Naive thymus-derived CD4-positive, alpha-beta T cell (primary cell): ENCODE measurements at regions of chr14 and their contacts with region 1.

Region 1: DNA sequence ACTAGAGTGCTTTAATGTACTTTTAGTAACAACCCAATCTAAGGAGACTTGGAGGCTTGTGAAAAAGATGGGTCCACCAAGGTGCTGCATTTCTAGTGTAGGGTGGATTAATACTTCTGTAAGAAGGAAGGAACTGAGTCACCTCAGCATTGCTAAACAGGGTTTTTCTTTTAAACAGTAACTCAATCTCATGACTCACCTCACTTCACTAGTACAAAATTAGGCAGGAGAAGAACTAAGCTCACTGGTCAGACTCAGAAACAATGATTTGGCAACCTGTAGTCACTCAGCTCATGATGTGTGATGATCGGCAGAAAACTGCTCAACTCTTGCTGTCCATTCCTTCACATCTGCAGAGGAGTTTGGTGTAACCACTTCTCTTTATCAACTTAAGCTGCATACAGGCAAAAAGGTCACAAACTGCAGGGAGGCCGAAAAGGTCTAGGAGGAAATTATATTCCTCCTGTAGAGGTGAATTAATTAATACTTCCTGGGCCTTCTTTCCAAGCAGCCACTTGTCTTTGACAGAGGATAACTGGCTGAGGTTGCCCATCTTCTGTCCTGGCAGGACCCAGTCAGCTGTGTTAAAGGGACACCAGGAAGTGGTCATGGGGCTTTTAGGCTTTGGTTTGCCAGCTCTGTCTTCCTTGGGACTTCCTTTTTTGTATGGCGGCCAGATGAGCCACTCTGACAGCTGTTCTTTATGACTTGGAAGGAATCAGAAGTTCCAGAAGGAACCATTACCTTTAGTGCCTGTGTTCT is 466.9 kb downstream of the FUT8 start:
- DNase-seq: no peak
- ATAC-seq: peak; percentile 26
- H3K4me3 ChIP-seq: no peak overlapping the region
- H3K4me3 Mint-ChIP-seq: peak overlapping the region in 1 of 10 donors; percentile 52
- H3K27ac ChIP-seq: no peak overlapping the region
- H3K27ac Mint-ChIP-seq: peak overlapping the region in 7 of 9 donors; percentile 17 to 89 (median 37)
- H3K4me1 ChIP-seq: peaks cover 0 to 27% of the 10 kb centered on the region in 2 donors
- H3K4me1 Mint-ChIP-seq: peaks cover 5 to 35% (median 26%) of the 10 kb centered on the region in 7 donors
- H3K27me3 ChIP-seq: no peaks in the 10 kb centered on the region
- H3K27me3 Mint-ChIP-seq: peaks cover 0 to 4% (median 0%) of the 10 kb centered on the region in 5 donors

Region 2: GRCh38 chr14:65824285-65824977 is 55.0 kb before region 1 on chr14:
- CTCF ChIA-PET with region 1: interaction called, 10 read pairs
- POLR2A ChIA-PET with region 1: no interaction called
- intact Hi-C with region 1: no loop called
- DNase-seq: peak in 8 of 9 donors; percentile 38 to 71 (median 60)
- ATAC-seq: peak; percentile 93
- H3K4me3 ChIP-seq: no peak overlapping the region
- H3K4me3 Mint-ChIP-seq: peak overlapping the region in 1 of 10 donors; percentile 39
- H3K27ac ChIP-seq: no peak overlapping the region
- H3K27ac Mint-ChIP-seq: peak overlapping the region in 3 of 9 donors; percentile 0 to 66 (median 66)
- H3K4me1 ChIP-seq: peaks cover 6 to 8% of the 10 kb centered on the region in 2 donors
- H3K4me1 Mint-ChIP-seq: peaks cover 3 to 33% (median 14%) of the 10 kb centered on the region in 7 donors
- H3K27me3 ChIP-seq: no peaks in the 10 kb centered on the region
- H3K27me3 Mint-ChIP-seq: peaks cover 0 to 7% (median 0%) of the 10 kb centered on the region in 5 donors

Region 3: DNA sequence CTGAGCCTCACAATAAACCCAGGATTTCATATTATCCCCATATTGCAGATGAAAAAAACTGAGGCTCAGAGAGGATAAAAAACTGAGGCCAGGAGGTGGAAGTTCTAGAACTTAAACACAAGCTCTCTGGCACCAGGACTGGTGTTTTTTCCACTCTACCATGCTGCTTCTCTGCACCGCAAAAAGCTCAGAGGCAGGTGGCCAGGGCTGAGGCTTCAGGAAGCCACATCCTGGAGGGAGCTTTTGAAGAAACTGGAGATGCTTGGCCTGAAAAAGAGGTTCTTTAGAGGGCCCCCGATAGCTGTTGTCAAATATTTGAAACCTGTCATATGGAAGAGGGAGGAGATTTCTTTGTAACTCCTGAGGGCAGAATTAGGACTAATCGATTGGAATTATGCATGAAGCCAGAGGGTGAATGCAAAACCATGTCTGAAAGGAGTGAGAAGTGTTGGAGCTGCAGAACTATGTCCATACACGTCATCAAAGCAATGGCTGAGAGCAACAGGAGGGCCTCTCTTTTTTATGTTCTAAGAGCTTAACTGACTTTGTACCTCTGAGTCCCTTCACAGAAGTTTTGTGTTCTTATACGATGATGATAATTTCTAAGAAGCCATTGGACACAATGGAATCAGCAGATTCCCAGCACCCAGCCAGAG is 18.3 kb before region 1 on chr14:
- CTCF ChIA-PET with region 1: interaction called, 7 read pairs
- POLR2A ChIA-PET with region 1: interaction called, 10 read pairs
- intact Hi-C with region 1: loop called in 1 of 2 experiments (anchors 2 kb)
- DNase-seq: peak in 7 of 9 donors; percentile 22 to 64 (median 49)
- ATAC-seq: peak; percentile 62
- H3K4me3 ChIP-seq: no peak overlapping the region
- H3K4me3 Mint-ChIP-seq: peak overlapping the region; percentile 12 to 78 (median 61)
- H3K27ac ChIP-seq: no peak overlapping the region
- H3K27ac Mint-ChIP-seq: peak overlapping the region; percentile 69 to 85 (median 78)
- H3K4me1 ChIP-seq: peaks cover 18 to 53% of the 10 kb centered on the region in 2 donors
- H3K4me1 Mint-ChIP-seq: peaks cover 41 to 73% (median 66%) of the 10 kb centered on the region in 7 donors
- H3K27me3 ChIP-seq: no peaks in the 10 kb centered on the region
- H3K27me3 Mint-ChIP-seq: peaks cover 0 to 1% (median 0%) of the 10 kb centered on the region in 5 donors

Region 4: GRCh38 chr14:65866886-65867285 is 12.5 kb before region 1 on chr14:
- CTCF ChIA-PET with region 1: interaction called, 7 read pairs
- POLR2A ChIA-PET with region 1: interaction called, 10 read pairs
- intact Hi-C with region 1: loop called in 1 of 2 experiments (anchors 2 kb)
- DNase-seq: no peak
- ATAC-seq: no peak
- H3K4me3 ChIP-seq: no peak overlapping the region
- H3K4me3 Mint-ChIP-seq: no peak overlapping the region
- H3K27ac ChIP-seq: no peak overlapping the region
- H3K27ac Mint-ChIP-seq: no peak overlapping the region
- H3K4me1 ChIP-seq: peaks cover 5 to 41% of the 10 kb centered on the region in 2 donors
- H3K4me1 Mint-ChIP-seq: peaks cover 25 to 50% (median 38%) of the 10 kb centered on the region in 7 donors
- H3K27me3 ChIP-seq: no peaks in the 10 kb centered on the region
- H3K27me3 Mint-ChIP-seq: no peaks in the 10 kb centered on the region

Region 5: GRCh38 chr14:65910108-65910786 is 30.8 kb after region 1 on chr14:
- CTCF ChIA-PET with region 1: no interaction called
- POLR2A ChIA-PET with region 1: interaction called, 3 read pairs
- intact Hi-C with region 1: loop called in 1 of 2 experiments (anchors 5 kb)
- DNase-seq: no peak
- ATAC-seq: no peak
- H3K4me3 ChIP-seq: no peak overlapping the region
- H3K4me3 Mint-ChIP-seq: no peak overlapping the region
- H3K27ac ChIP-seq: no peak overlapping the region
- H3K27ac Mint-ChIP-seq: peak overlapping the region in 1 of 9 donors; percentile 15
- H3K4me1 ChIP-seq: peaks cover 0 to 8% of the 10 kb centered on the region in 2 donors
- H3K4me1 Mint-ChIP-seq: peaks cover 14 to 64% (median 56%) of the 10 kb centered on the region in 7 donors
- H3K27me3 ChIP-seq: no peaks in the 10 kb centered on the region
- H3K27me3 Mint-ChIP-seq: peaks cover 0 to 24% (median 0%) of the 10 kb centered on the region in 5 donors